Activated naive CD4-positive, alpha-beta T cell treated with anti-CD3 and anti-CD28 coated beads for 36 hours (primary cell): ENCODE measurements at regions of chr11 and their contacts with region 1.

Region 1: DNA sequence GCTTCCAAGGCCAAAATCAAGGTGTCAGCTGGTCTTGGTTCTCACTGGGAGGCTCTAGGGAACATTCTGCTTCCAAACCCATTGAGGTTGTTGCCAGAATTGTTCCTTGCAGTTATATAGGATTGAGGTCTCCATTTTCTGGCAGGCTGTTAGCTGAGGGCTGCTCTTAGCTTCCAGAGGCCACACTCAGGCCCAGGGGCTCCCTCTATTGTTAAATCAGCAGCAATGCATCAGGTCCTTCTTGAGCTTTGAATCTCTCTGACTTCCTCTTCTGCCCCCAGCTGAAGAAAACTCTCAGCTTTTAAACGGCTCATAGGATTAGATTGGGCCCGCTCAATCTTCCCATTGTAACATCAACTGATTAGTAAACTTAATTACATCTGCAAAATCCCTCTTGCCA is 39.3 kb upstream of the BSX start:
- DNase-seq: peak; percentile 47
- H3K4me3 Mint-ChIP-seq: no peak overlapping the region
- H3K27ac Mint-ChIP-seq: no peak overlapping the region
- H3K4me1 Mint-ChIP-seq: peaks cover 6% of the 10 kb centered on the region
- H3K27me3 Mint-ChIP-seq: no peaks in the 10 kb centered on the region

Region 2: GRCh38 chr11:122578168-122578825 is 442.7 kb before region 1 on chr11:
- CTCF ChIA-PET with region 1: interaction called, 4 read pairs
- intact Hi-C with region 1: loop called (anchors 1 kb)
- DNase-seq: peak; percentile 17
- H3K4me3 Mint-ChIP-seq: no peak overlapping the region
- H3K27ac Mint-ChIP-seq: no peak overlapping the region
- H3K4me1 Mint-ChIP-seq: peaks cover 7% of the 10 kb centered on the region
- H3K27me3 Mint-ChIP-seq: no peaks in the 10 kb centered on the region

Region 3: GRCh38 chr11:122642472-122642922 is 378.5 kb before region 1 on chr11:
- CTCF ChIA-PET with region 1: no interaction called
- intact Hi-C with region 1: no loop called
- DNase-seq: no peak
- H3K4me3 Mint-ChIP-seq: no peak overlapping the region
- H3K27ac Mint-ChIP-seq: no peak overlapping the region
- H3K4me1 Mint-ChIP-seq: peaks cover 3% of the 10 kb centered on the region
- H3K27me3 Mint-ChIP-seq: no peaks in the 10 kb centered on the region

Region 4: GRCh38 chr11:122796128-122796717 is 224.7 kb before region 1 on chr11:
- CTCF ChIA-PET with region 1: interaction called, 15 read pairs
- intact Hi-C with region 1: loop called (anchors 1 kb)
- DNase-seq: peak; percentile 84
- H3K4me3 Mint-ChIP-seq: no peak overlapping the region
- H3K27ac Mint-ChIP-seq: no peak overlapping the region
- H3K4me1 Mint-ChIP-seq: peaks cover 2% of the 10 kb centered on the region
- H3K27me3 Mint-ChIP-seq: no peaks in the 10 kb centered on the region

Region 5: DNA sequence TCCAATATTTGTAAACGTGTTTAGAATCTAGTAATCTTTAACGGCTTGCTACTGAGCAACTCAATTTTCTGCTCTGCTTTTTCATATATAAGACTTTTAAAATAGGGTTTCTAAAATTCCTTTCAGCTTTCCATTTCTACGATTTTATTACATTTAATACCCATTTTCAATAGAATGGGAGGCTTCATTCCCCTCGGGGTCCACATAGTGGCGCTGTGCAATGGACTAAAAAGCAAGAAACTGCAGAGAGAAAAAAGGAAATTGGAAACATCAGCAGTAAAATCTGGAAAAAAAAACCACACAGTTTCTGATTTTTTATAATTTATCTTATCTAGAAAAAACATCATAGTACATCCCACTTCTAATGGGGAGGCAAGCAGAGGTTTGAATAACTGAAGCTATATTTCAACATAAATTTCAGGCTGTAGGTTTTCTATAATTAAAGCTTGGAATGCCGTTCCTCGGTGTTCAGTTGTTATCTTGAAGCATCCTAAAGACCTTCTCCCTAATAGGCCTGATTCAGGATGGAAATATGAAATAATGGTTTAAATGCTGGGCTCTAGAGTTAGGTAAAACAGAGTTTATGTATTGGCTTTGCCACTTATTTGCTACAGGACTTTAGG is 157.2 kb before region 1 on chr11:
- CTCF ChIA-PET with region 1: interaction called, 193 read pairs
- intact Hi-C with region 1: loop called (anchors 1 kb)
- DNase-seq: peak; percentile 73
- H3K4me3 Mint-ChIP-seq: no peak overlapping the region
- H3K27ac Mint-ChIP-seq: no peak overlapping the region
- H3K4me1 Mint-ChIP-seq: no peaks in the 10 kb centered on the region
- H3K27me3 Mint-ChIP-seq: no peaks in the 10 kb centered on the region

Region 6: DNA sequence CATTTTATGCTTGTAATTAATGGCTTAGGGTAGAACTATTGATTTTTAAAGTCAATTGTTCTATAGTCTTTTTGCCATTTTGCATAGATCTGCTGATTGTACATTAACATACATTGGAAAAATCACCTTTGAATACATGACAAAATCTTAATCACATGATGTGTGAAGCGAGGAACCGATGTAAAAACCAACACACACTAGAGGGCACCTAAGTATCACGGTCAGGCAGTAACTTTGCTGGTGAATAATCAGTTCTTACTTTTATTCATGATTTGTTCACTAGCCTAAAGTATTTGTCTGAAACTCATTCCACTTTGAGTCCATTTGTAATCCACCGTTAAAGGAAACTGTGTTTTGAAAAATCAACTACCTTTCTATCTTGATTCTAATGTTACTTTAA is 110.2 kb before region 1 on chr11:
- CTCF ChIA-PET with region 1: interaction called, 7 read pairs
- intact Hi-C with region 1: loop called (anchors 1 kb)
- DNase-seq: peak; percentile 46
- H3K4me3 Mint-ChIP-seq: no peak overlapping the region
- H3K27ac Mint-ChIP-seq: no peak overlapping the region
- H3K4me1 Mint-ChIP-seq: no peaks in the 10 kb centered on the region
- H3K27me3 Mint-ChIP-seq: no peaks in the 10 kb centered on the region

Region 7: GRCh38 chr11:123054301-123055065 is 33.5 kb after region 1 on chr11:
- CTCF ChIA-PET with region 1: interaction called, 17 read pairs
- intact Hi-C with region 1: loop called (anchors 1 kb)
- DNase-seq: peak; percentile 17
- H3K4me3 Mint-ChIP-seq: no peak overlapping the region
- H3K27ac Mint-ChIP-seq: peak overlapping the region; percentile 70
- H3K4me1 Mint-ChIP-seq: peaks cover 37% of the 10 kb centered on the region
- H3K27me3 Mint-ChIP-seq: no peaks in the 10 kb centered on the region

Region 8: GRCh38 chr11:123188508-123189165 is 167.7 kb after region 1 on chr11:
- CTCF ChIA-PET with region 1: no interaction called
- intact Hi-C with region 1: no loop called
- DNase-seq: no peak
- H3K4me3 Mint-ChIP-seq: no peak overlapping the region
- H3K27ac Mint-ChIP-seq: no peak overlapping the region
- H3K4me1 Mint-ChIP-seq: peaks cover 17% of the 10 kb centered on the region
- H3K27me3 Mint-ChIP-seq: peaks cover 32% of the 10 kb centered on the region